Endothelial cell of umbilical vein (primary cell): ENCODE measurements at regions of chr12 and their contacts with region 1.

Region 1: DNA sequence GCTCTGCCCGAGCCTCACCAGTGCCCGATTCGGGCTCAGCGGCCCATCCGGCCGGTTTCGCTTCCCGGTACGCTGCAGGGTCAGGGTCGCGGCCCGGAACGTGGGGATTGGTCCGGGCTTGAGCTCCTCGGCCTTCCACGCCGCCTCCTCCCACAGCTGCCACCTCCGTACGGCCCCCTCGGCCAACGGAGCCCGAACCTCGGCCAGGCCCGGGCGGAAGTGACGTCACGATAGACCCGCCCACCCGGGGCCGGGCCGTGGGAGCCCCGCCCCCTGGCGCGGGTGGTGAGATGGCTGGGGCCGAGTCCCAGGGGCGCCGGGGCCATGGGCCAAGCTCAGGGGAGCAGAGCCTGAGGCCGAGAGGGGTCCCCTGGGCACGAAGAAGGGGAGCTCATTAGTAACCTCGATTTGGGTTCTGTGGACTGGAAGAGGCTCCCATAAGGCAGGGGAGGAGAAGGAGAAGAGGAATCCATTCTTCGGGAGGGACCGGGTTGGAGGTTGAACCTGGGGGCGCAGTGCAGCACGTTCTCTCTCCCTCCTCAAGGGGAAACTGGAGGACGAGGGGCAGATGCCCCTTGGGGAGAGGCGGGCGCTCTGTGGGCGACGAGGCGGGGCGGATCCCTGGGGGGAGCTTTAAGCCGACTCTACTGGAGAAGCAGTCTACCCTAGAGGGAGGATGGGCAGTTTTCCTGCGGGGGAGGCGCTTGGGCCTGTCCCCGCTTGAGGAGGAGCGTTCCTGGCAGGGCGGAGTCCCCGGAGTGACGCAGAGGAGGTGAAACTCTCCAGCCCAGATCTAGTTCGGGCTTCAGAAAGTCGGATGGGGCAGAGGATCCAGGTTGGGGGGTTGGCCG is at the start of gene MLF2:
- DNase-seq: peak; percentile 99
- H3K4me3 ChIP-seq: peak within 1 kb of the TSS; percentile 52 to 76 (median 72)
- H3K27ac ChIP-seq: peak within 1 kb of the TSS; percentile 98
- H3K4me1 ChIP-seq: peaks cover 10% of the 10 kb centered on the region
- H3K27me3 ChIP-seq: no peaks in the 10 kb centered on the region
- CTCF ChIP-seq: peak in 1 of 2 donors; percentile 98
- POLR2A ChIP-seq: peak; percentile 62
- total RNA-seq, gene MLF2: 136 and 147 TPM in 2 replicates

Region 2: DNA sequence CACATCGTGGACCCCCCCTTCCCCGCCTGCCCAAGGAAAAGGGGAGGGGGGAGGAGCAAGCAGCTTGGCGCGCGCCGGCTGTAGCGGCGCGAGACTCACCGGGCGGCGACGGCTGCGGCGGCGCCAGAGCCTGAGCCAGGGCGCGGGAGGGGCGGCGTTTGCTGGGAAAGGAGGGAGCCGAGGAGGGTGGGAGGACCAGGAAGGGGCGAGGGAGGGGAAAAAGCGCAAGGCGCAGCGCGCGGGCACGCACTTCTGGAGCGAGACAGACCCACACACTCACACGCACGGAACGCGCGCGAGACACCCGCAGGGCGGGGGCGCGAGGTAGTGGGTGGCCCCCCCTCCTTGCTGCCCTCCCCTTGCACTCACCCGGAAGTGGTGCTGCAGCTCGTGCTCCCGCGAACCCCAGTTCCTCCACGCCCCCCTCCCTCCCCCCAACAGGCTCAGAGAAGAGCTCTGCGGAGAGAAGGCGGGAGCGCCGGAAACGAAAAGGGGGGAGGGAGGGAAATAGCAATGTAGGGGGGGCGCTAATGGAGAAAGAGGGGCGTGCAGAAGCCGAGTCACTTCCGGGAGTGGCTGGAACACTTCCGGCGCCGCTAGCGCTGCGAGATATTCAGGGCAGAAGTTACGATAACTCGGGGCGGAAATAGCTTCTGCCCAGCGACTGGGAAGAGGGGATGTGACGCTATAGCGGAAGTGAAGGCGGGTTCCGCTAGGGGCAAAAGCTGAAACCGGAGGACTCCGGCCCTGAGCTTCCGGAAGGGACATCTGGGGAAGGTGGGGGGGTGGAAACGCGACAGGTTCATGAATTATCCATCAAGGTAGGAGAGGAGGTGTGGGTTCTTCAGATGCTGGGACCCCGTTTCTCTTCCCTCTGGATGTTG is 63.9 kb before region 1 on chr12 and contains the start of gene ZNF384:
- CTCF ChIA-PET with region 1: interaction called, 10 read pairs
- POLR2A ChIA-PET with region 1: interaction called, 12 read pairs
- dilution Hi-C with region 1: no loop called
- intact Hi-C with region 1: loop called (anchors 1 kb)
- DNase-seq: peak; percentile 98
- H3K4me3 ChIP-seq: peak within 1 kb of the TSS; percentile 65 to 99 (median 89)
- H3K27ac ChIP-seq: peak within 1 kb of the TSS; percentile 83
- H3K4me1 ChIP-seq: peaks cover 21% of the 10 kb centered on the region
- H3K27me3 ChIP-seq: no peaks in the 10 kb centered on the region
- CTCF ChIP-seq: peak in 1 of 2 donors; percentile 3
- POLR2A ChIP-seq: peak; percentile 92
- total RNA-seq, gene ZNF384: 52.8 and 58.5 TPM in 2 replicates

Region 3: DNA sequence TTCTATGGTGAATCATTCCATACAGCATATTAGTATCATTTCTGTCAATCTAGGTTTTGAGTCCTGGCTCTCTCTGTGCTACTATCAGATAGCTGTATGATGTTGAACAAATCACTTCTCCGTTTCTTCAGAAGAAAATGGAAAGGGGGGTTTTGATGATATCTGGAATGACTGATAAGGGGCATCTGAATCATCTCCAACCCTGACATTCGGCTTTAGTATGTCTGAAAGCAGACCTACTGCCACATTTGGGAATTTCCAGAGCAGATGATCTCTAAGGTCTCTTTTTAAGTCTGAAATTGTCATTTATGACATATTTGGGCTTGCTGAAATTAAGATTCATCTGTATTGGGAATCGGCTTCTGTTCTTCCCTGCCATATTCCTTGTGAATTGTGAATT is 10.3 kb before region 1 on chr12:
- CTCF ChIA-PET with region 1: interaction called, 13 read pairs
- POLR2A ChIA-PET with region 1: no interaction called
- dilution Hi-C with region 1: no loop called
- intact Hi-C with region 1: no loop called
- DNase-seq: no peak
- H3K4me3 ChIP-seq: no peak overlapping the region
- H3K27ac ChIP-seq: no peak overlapping the region
- H3K4me1 ChIP-seq: no peaks in the 10 kb centered on the region
- H3K27me3 ChIP-seq: no peaks in the 10 kb centered on the region
- CTCF ChIP-seq: no peak
- POLR2A ChIP-seq: no peak

Region 4: GRCh38 chr12:6778574-6779550 is 25.7 kb after region 1 on chr12:
- CTCF ChIA-PET with region 1: interaction called, 107 read pairs
- POLR2A ChIA-PET with region 1: no interaction called
- dilution Hi-C with region 1: no loop called
- intact Hi-C with region 1: loop called (anchors 1 kb)
- DNase-seq: peak; percentile 94
- H3K4me3 ChIP-seq: peak overlapping the region in 1 of 3 experiments; percentile 6
- H3K27ac ChIP-seq: no peak overlapping the region
- H3K4me1 ChIP-seq: peaks cover 5% of the 10 kb centered on the region
- H3K27me3 ChIP-seq: no peaks in the 10 kb centered on the region
- CTCF ChIP-seq: peak; percentile 93 to 95
- POLR2A ChIP-seq: peak; percentile 22

Region 5: GRCh38 chr12:6833189-6833890 is 80.2 kb after region 1 on chr12:
- CTCF ChIA-PET with region 1: interaction called, 148 read pairs
- POLR2A ChIA-PET with region 1: interaction called, 3 read pairs
- dilution Hi-C with region 1: no loop called
- intact Hi-C with region 1: no loop called
- DNase-seq: no peak
- H3K4me3 ChIP-seq: no peak overlapping the region
- H3K27ac ChIP-seq: no peak overlapping the region
- H3K4me1 ChIP-seq: peaks cover 9% of the 10 kb centered on the region
- H3K27me3 ChIP-seq: no peaks in the 10 kb centered on the region
- CTCF ChIP-seq: no peak
- POLR2A ChIP-seq: no peak

Region 6: GRCh38 chr12:6873094-6874014 is 120.2 kb after region 1 on chr12 and contains the start of gene SPSB2:
- CTCF ChIA-PET with region 1: interaction called, 14 read pairs
- POLR2A ChIA-PET with region 1: interaction called, 5 read pairs
- dilution Hi-C with region 1: no loop called
- intact Hi-C with region 1: loop called (anchors 1 kb)
- DNase-seq: peak; percentile 96
- H3K4me3 ChIP-seq: peak within 1 kb of the TSS; percentile 59 to 92 (median 84)
- H3K27ac ChIP-seq: peak within 1 kb of the TSS; percentile 60
- H3K4me1 ChIP-seq: peaks cover 34% of the 10 kb centered on the region
- H3K27me3 ChIP-seq: no peaks in the 10 kb centered on the region
- CTCF ChIP-seq: no peak
- POLR2A ChIP-seq: peak; percentile 91
- total RNA-seq, gene SPSB2: 3.9 and 6.9 TPM in 2 replicates

Region 7: GRCh38 chr12:7129872-7130680 is 376.9 kb after region 1 on chr12 and contains the start of gene CLSTN3:
- CTCF ChIA-PET with region 1: no interaction called
- POLR2A ChIA-PET with region 1: no interaction called
- dilution Hi-C with region 1: no loop called
- intact Hi-C with region 1: no loop called
- DNase-seq: peak; percentile 87
- H3K4me3 ChIP-seq: peak within 1 kb of the TSS; percentile 81 to 85 (median 83)
- H3K27ac ChIP-seq: no peak within 1 kb of the TSS
- H3K4me1 ChIP-seq: peaks cover 22% of the 10 kb centered on the region
- H3K27me3 ChIP-seq: no peaks in the 10 kb centered on the region
- CTCF ChIP-seq: no peak
- POLR2A ChIP-seq: no peak
- total RNA-seq, gene CLSTN3: 24.2 and 27.8 TPM in 2 replicates